Mammary epithelial cell (primary cell): ENCODE measurements at regions of chr2 and their contacts with region 1.

Region 1: GRCh38 chr2:112726497-112727190 is 5.8 kb downstream of the NT5DC4 start:
- DNase-seq: peak; percentile 94
- H3K4me3 ChIP-seq: no peak overlapping the region
- H3K27ac ChIP-seq: peak overlapping the region; percentile 62
- H3K4me1 ChIP-seq: peaks cover 26% of the 10 kb centered on the region
- H3K27me3 ChIP-seq: no peaks in the 10 kb centered on the region
- CTCF ChIP-seq: peak; percentile 94 to 99

Region 2: DNA sequence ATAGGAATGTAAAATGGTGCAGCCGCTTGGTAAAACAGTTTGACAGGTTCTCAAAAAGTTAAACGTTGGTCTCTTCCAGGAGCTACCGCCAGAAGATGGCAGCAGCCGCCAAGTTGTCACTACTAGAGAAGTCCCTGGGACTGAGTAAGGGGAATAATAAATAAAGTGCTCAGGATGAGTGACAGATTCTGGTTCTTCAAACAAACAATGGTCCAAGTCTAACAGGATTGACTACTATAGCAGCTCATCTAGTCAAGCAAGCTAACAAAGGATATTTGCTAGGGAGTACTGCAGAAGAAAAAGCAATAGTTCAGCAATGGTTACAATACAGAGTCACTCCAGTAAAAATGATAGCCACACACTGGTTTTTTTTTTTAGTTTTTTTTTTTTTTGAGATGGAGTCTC is 838.8 kb before region 1 on chr2:
- CTCF ChIA-PET with region 1: no interaction called
- dilution Hi-C with region 1: no loop called
- in situ Hi-C with region 1: no loop called
- intact Hi-C with region 1: loop called (anchors 5 kb)
- DNase-seq: peak; percentile 37
- H3K4me3 ChIP-seq: no peak overlapping the region
- H3K27ac ChIP-seq: no peak overlapping the region
- H3K4me1 ChIP-seq: no peaks in the 10 kb centered on the region
- H3K27me3 ChIP-seq: no peaks in the 10 kb centered on the region
- CTCF ChIP-seq: peak; percentile 57 to 74

Region 3: GRCh38 chr2:112254466-112255239 is 472.0 kb before region 1 on chr2 and contains the start of gene ZC3H8:
- CTCF ChIA-PET with region 1: no interaction called
- dilution Hi-C with region 1: no loop called
- in situ Hi-C with region 1: no loop called
- intact Hi-C with region 1: loop called (anchors 10 kb)
- DNase-seq: peak; percentile 87
- H3K4me3 ChIP-seq: peak within 1 kb of the TSS; percentile 67 to 80 (median 78)
- H3K27ac ChIP-seq: peak within 1 kb of the TSS; percentile 49
- H3K4me1 ChIP-seq: peaks cover 9% of the 10 kb centered on the region
- H3K27me3 ChIP-seq: no peaks in the 10 kb centered on the region
- CTCF ChIP-seq: no peak
- total RNA-seq, gene ZC3H8: 13.8 to 19.9 TPM

Region 4: GRCh38 chr2:112584134-112584890 is 142.3 kb before region 1 on chr2 and contains the start of gene CHCHD5:
- CTCF ChIA-PET with region 1: no interaction called
- dilution Hi-C with region 1: no loop called
- in situ Hi-C with region 1: no loop called
- intact Hi-C with region 1: loop called (anchors 1 kb)
- DNase-seq: peak; percentile 97
- H3K4me3 ChIP-seq: peak within 1 kb of the TSS; percentile 67 to 85 (median 72)
- H3K27ac ChIP-seq: peak within 1 kb of the TSS; percentile 98
- H3K4me1 ChIP-seq: peaks cover 21% of the 10 kb centered on the region
- H3K27me3 ChIP-seq: no peaks in the 10 kb centered on the region
- CTCF ChIP-seq: peak in 1 of 2 donors; percentile 16
- total RNA-seq, gene CHCHD5: 10.2 to 42.6 TPM

Region 5: DNA sequence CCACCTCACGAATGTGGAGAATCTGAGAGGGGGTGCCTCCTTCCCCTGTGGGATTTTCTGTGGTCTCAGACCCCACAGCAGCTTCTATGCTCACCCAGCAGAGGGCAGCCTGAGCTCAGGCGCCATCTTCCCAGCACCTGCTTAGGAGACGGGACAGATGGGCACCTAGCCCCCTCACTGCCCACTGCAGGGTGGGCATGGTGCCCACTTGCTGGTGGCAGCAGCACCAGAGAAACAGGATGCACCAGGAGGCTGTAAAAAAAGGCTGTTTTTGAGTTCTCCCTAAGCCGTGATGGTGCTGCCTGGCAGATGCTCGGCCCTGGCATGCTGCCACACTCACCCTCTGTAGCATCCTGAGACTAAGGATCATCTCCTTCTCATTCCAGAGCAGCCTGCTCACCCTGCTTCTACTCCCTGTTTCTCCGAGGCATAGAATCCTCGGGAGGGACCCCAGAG is 100.0 kb before region 1 on chr2:
- CTCF ChIA-PET with region 1: interaction called, 3 read pairs
- dilution Hi-C with region 1: no loop called
- in situ Hi-C with region 1: no loop called
- intact Hi-C with region 1: loop called (anchors 1 kb)
- DNase-seq: no peak
- H3K4me3 ChIP-seq: peak overlapping the region in 2 of 3 experiments; percentile 28 to 33
- H3K27ac ChIP-seq: peak overlapping the region; percentile 98
- H3K4me1 ChIP-seq: peaks cover 93% of the 10 kb centered on the region
- H3K27me3 ChIP-seq: no peaks in the 10 kb centered on the region
- CTCF ChIP-seq: peak; percentile 78 to 95

Region 6: DNA sequence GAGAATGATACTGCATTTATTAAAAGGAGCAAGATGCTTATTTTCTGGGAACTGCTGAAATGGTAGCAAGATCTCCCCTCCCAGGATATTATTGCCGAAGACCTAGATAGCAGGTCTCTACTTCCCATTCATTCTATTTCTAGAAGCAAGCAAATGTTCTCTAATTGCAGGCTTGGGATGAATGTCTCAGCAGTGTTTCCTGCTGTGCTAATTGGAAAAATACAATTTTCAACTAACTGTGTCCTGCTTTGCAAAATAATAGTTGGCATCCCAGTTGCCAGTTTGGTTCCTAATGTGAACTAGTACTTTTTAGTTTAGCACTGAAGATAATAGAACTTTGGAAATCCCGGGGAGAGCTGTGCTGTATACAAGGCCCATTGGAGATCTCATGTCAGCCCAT is 54.8 kb before region 1 on chr2:
- CTCF ChIA-PET with region 1: no interaction called
- dilution Hi-C with region 1: no loop called
- in situ Hi-C with region 1: no loop called
- intact Hi-C with region 1: loop called (anchors 2 kb)
- DNase-seq: no peak
- H3K4me3 ChIP-seq: no peak overlapping the region
- H3K27ac ChIP-seq: no peak overlapping the region
- H3K4me1 ChIP-seq: no peaks in the 10 kb centered on the region
- H3K27me3 ChIP-seq: no peaks in the 10 kb centered on the region
- CTCF ChIP-seq: no peak

Region 7: GRCh38 chr2:112692496-112692911 is 34.1 kb before region 1 on chr2:
- CTCF ChIA-PET with region 1: interaction called, 8 read pairs
- dilution Hi-C with region 1: loop called (anchors 5 kb)
- in situ Hi-C with region 1: no loop called
- intact Hi-C with region 1: loop called (anchors 1 kb)
- DNase-seq: peak; percentile 100
- H3K4me3 ChIP-seq: no peak overlapping the region
- H3K27ac ChIP-seq: peak overlapping the region; percentile 97
- H3K4me1 ChIP-seq: peaks cover 34% of the 10 kb centered on the region
- H3K27me3 ChIP-seq: no peaks in the 10 kb centered on the region
- CTCF ChIP-seq: no peak